Mammary epithelial cell (primary cell): ENCODE measurements at regions of chr9 and their contacts with region 1.

Region 1: DNA sequence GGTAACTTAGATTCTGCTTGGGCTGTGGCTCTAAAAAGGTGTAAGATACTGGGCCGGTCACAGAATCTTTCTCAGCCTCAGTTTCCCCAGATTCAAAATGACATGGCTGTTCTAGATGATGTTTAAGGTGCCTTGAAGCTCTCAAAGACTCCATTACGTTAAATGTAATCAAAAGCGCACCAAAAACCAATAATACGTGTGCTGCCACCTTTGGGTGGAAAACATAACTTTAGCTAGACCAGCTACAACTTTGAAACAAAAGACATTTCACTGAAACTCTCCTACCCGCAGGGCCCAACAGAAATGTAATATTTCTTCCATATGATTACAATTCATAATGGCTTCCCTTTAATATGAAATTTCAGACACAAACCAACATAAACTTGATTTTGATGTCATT is 35.0 kb upstream of the PCSK5 start:
- DNase-seq: peak; percentile 16
- H3K4me3 ChIP-seq: no peak overlapping the region
- H3K27ac ChIP-seq: no peak overlapping the region
- H3K4me1 ChIP-seq: no peaks in the 10 kb centered on the region
- H3K27me3 ChIP-seq: no peaks in the 10 kb centered on the region
- CTCF ChIP-seq: peak; percentile 45 to 48

Region 2: DNA sequence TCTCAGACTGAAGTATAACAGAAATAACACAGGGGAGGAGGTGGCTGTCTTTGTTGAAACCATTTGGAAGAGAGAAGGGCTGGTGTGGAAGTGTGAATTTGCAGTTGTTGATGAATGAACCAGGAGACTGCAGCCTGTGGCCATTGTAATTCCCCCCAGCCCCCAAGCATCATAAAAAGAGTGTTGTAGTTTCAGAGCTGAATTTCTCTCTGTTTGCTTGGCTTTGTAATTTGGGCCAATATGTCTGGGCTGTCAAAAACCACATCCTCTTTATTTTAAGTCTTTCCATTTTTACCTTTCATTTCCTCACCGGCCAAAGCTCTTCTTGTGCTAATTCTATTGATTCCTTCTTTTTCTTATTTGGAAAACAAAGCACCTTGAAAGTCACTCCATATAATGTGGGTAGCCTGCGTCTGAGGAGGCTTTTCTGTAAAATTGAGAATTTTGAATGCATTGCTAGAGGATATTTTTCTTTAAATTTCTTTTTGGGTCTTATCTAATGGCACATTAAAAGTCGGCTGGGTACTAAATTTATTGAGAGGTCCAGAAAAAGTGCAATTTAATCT is 383.9 kb before region 1 on chr9:
- CTCF ChIA-PET with region 1: no interaction called
- dilution Hi-C with region 1: no loop called
- in situ Hi-C with region 1: no loop called
- intact Hi-C with region 1: no loop called
- DNase-seq: no peak
- H3K4me3 ChIP-seq: no peak overlapping the region
- H3K27ac ChIP-seq: no peak overlapping the region
- H3K4me1 ChIP-seq: no peaks in the 10 kb centered on the region
- H3K27me3 ChIP-seq: no peaks in the 10 kb centered on the region
- CTCF ChIP-seq: no peak

Region 3: GRCh38 chr9:75601279-75601678 is 254.2 kb before region 1 on chr9:
- CTCF ChIA-PET with region 1: no interaction called
- dilution Hi-C with region 1: no loop called
- in situ Hi-C with region 1: no loop called
- intact Hi-C with region 1: loop called (anchors 5 kb)
- DNase-seq: peak; percentile 2
- H3K4me3 ChIP-seq: no peak overlapping the region
- H3K27ac ChIP-seq: no peak overlapping the region
- H3K4me1 ChIP-seq: no peaks in the 10 kb centered on the region
- H3K27me3 ChIP-seq: no peaks in the 10 kb centered on the region
- CTCF ChIP-seq: no peak